ENCODE measurements at regions of chr11 and their contacts with region 1.

Region 1: DNA sequence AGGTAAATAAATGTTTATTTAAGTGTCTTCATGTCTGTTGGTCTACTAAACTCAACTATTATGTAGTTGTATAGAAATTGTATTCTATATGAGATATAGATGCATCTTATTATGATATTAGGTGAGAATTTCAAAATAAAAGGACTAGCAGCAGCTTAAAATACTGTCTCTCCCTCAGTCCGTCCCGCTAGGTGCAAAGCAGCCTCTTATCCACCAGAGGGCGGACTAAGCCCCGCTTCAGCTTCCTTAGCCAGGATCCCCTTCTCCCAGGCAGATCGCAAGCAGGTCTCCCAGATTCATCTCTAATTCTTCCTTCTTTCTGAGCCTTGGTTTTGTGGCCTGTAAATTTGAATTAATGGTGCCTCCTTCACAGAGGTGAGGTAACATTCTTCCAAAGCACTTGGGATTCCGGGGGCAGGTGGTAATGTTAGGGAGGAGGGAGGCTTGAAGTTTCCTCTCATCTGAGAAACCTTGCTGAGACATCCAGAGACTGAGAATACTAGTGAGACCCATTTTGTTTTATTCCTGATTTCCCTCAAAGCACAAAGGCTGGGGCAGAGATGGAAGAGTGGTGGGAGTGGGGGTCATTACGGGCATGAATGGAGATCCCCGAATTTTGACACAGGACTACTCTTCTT is 13.5 kb upstream of the INSC start:
- DNase-seq: peak; percentile 64
- ATAC-seq: peak; percentile 95
- H3K4me3 ChIP-seq: no peak overlapping the region
- H3K27ac ChIP-seq: no peak overlapping the region
- H3K4me1 ChIP-seq: no peaks in the 10 kb centered on the region
- H3K27me3 ChIP-seq: no peaks in the 10 kb centered on the region
- CTCF ChIP-seq: peak; percentile 90

Region 2: GRCh38 chr11:14742849-14743559 is 358.2 kb before region 1 on chr11:
- CTCF ChIA-PET with region 1: no interaction called
- POLR2A ChIA-PET with region 1: no interaction called
- in situ Hi-C with region 1: no loop called
- intact Hi-C with region 1: no loop called
- DNase-seq: no peak
- ATAC-seq: no peak
- H3K4me3 ChIP-seq: no peak overlapping the region
- H3K27ac ChIP-seq: no peak overlapping the region
- H3K4me1 ChIP-seq: no peaks in the 10 kb centered on the region
- H3K27me3 ChIP-seq: no peaks in the 10 kb centered on the region
- CTCF ChIP-seq: no peak

Region 3: GRCh38 chr11:14954581-14954980 is 146.6 kb before region 1 on chr11:
- CTCF ChIA-PET with region 1: no interaction called
- POLR2A ChIA-PET with region 1: no interaction called
- in situ Hi-C with region 1: no loop called
- intact Hi-C with region 1: no loop called
- DNase-seq: no peak
- ATAC-seq: no peak
- H3K4me3 ChIP-seq: no peak overlapping the region
- H3K27ac ChIP-seq: no peak overlapping the region
- H3K4me1 ChIP-seq: no peaks in the 10 kb centered on the region
- H3K27me3 ChIP-seq: peaks cover 2% of the 10 kb centered on the region
- CTCF ChIP-seq: no peak

Region 4: DNA sequence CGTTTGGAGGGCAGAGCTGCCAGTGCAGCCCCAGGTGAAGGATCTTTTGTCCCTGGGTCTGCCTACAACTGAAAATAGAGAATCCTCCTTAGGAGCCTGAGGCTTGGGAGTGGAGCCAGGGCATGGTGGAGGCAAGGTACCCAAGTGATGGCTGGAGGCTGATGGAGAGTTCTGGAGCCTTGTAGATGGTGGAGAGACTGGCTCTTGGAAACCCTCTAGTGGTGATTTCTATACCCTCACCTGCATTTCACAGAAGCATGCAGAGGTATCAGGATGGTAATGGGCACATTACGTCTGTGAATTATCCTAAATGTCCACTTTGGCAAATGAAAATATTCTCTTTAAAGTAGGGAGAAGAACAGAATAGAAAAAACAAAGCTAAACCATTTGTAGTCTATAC is 57.9 kb after region 1 on chr11:
- CTCF ChIA-PET with region 1: interaction called, 12 read pairs
- POLR2A ChIA-PET with region 1: no interaction called
- in situ Hi-C with region 1: no loop called
- intact Hi-C with region 1: no loop called
- DNase-seq: peak; percentile 8
- ATAC-seq: peak; percentile 87
- H3K4me3 ChIP-seq: no peak overlapping the region
- H3K27ac ChIP-seq: no peak overlapping the region
- H3K4me1 ChIP-seq: no peaks in the 10 kb centered on the region; the same call in 1 of the 2 replicates
- H3K27me3 ChIP-seq: no peaks in the 10 kb centered on the region
- CTCF ChIP-seq: peak; percentile 58

Region 5: DNA sequence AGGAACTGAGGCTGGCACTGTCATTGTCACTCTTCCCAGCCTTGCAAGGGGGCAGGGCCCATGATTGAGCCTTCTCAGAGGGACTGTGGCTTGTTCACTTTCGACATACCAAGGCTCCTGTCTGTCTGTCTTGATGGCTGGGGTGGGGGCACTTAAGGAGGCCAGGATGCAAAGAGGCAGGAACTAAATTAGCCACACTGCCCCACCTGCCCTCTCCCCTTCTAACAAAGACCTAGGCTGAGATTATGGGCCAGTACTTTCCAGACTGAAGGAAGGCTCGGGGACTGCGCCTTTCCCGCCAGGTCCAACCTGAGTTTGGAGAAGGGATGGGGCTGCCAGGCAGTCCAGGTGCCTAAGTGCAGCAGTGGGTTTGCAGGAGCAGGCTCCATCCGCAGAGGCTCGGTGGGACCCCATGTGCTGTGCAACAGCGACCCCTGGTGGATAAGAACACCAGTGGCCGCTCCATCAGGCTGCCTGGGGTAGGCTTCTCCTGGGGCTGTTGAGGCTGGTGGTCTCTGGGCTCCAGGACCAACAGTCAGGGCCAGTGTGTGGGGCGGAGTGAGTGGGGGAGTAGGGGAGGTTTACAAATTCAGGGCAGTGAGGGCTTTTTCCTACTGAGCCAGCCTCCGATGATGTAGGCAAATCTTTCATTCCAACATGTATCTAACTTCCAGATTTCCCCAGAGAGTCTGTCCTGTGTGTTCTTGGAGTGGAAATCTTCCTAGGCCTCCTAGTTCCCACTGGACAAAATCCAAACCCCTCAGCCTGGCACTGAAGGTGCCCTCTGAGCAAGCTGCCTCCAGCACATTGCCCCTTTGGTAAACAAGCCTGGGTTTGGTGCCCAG is 107.4 kb after region 1 on chr11:
- CTCF ChIA-PET with region 1: interaction called, 10 read pairs
- POLR2A ChIA-PET with region 1: no interaction called
- in situ Hi-C with region 1: no loop called
- intact Hi-C with region 1: loop called (anchors 1 kb)
- DNase-seq: peak; percentile 20
- ATAC-seq: peak; percentile 98
- H3K4me3 ChIP-seq: no peak overlapping the region
- H3K27ac ChIP-seq: no peak overlapping the region
- H3K4me1 ChIP-seq: no peaks in the 10 kb centered on the region
- H3K27me3 ChIP-seq: no peaks in the 10 kb centered on the region
- CTCF ChIP-seq: peak; percentile 89

Measured in Panc1 (cell line).